Endothelial cell of umbilical vein (primary cell): ENCODE measurements at regions of chr3 and their contacts with region 1.

Region 1: GRCh38 chr3:183766745-183767606 is 58.4 kb downstream of the MAP6D1 start:
- DNase-seq: peak; percentile 74
- H3K4me3 ChIP-seq: no peak overlapping the region
- H3K27ac ChIP-seq: no peak overlapping the region
- H3K4me1 ChIP-seq: peaks cover 22% of the 10 kb centered on the region
- H3K27me3 ChIP-seq: no peaks in the 10 kb centered on the region
- CTCF ChIP-seq: peak; percentile 69 to 80
- POLR2A ChIP-seq: no peak

Region 2: DNA sequence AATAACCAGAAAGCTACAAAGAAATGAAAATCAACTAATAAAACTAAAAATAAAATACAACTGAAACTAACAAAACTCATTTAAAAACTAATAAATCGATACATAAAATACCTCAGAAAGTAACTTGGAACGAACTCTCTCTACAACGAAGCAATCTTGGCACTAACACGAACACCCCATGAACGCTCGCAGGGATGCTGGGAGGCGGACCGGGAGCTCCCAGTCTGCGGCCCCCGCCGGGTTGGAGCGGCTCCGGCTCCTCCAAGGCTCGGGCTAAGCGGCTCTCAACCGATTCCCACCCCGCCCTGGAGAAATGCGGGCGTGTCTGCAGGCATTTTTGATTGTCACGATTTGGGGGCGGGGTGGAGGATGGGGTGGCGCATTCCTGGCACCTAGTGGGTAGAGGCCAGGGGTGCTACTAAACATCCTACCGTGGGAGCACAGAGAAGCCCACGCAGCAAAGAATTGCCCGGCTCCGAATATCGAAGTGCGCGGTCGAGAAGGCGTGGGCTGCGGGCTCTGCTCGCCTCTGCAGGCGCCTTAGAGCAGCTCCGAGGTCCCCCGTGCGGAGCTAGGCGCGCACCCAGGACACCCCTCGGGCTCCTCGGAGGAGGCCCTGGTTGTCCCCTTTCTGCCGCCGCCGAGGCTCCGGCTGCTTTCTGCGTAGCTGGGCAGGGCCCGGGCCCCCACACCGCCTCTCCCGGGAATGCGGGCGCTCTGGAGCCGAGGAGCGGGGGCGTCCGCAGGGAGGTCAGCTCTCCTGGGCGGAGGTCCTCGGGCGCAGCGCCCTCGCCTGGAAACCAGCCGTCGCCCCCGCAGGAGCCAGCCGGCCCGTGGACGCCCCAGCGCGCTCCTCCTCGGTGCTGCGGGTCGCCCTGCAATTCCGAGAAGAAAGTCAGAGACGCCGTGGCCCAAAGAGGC is 588.1 kb before region 1 on chr3:
- CTCF ChIA-PET with region 1: no interaction called
- POLR2A ChIA-PET with region 1: no interaction called
- dilution Hi-C with region 1: no loop called
- intact Hi-C with region 1: loop called (anchors 5 kb)
- DNase-seq: peak; percentile 37
- H3K4me3 ChIP-seq: peak overlapping the region; percentile 38 to 78 (median 40)
- H3K27ac ChIP-seq: peak overlapping the region; percentile 7
- H3K4me1 ChIP-seq: peaks cover 5% of the 10 kb centered on the region
- H3K27me3 ChIP-seq: peaks cover 0 to 8% of the 10 kb centered on the region in 2 experiments
- CTCF ChIP-seq: peak; percentile 32 to 42
- POLR2A ChIP-seq: no peak

Region 3: GRCh38 chr3:183475016-183475763 is 291.8 kb before region 1 on chr3:
- CTCF ChIA-PET with region 1: interaction called, 84 read pairs
- POLR2A ChIA-PET with region 1: no interaction called
- dilution Hi-C with region 1: no loop called
- intact Hi-C with region 1: no loop called
- DNase-seq: peak; percentile 83
- H3K4me3 ChIP-seq: no peak overlapping the region
- H3K27ac ChIP-seq: no peak overlapping the region
- H3K4me1 ChIP-seq: peaks cover 3% of the 10 kb centered on the region
- H3K27me3 ChIP-seq: no peaks in the 10 kb centered on the region
- CTCF ChIP-seq: no peak
- POLR2A ChIP-seq: no peak

Region 4: GRCh38 chr3:183635431-183636220 is 131.3 kb before region 1 on chr3 and contains the start of gene KLHL24:
- CTCF ChIA-PET with region 1: no interaction called
- POLR2A ChIA-PET with region 1: no interaction called
- dilution Hi-C with region 1: no loop called
- intact Hi-C with region 1: loop called (anchors 2 kb)
- DNase-seq: peak; percentile 93
- H3K4me3 ChIP-seq: peak within 1 kb of the TSS; percentile 81 to 99 (median 84)
- H3K27ac ChIP-seq: peak within 1 kb of the TSS; percentile 89
- H3K4me1 ChIP-seq: peaks cover 19% of the 10 kb centered on the region
- H3K27me3 ChIP-seq: no peaks in the 10 kb centered on the region
- CTCF ChIP-seq: no peak
- POLR2A ChIP-seq: peak; percentile 41
- total RNA-seq, gene KLHL24: 45.8 and 46.2 TPM in 2 replicates

Region 5: DNA sequence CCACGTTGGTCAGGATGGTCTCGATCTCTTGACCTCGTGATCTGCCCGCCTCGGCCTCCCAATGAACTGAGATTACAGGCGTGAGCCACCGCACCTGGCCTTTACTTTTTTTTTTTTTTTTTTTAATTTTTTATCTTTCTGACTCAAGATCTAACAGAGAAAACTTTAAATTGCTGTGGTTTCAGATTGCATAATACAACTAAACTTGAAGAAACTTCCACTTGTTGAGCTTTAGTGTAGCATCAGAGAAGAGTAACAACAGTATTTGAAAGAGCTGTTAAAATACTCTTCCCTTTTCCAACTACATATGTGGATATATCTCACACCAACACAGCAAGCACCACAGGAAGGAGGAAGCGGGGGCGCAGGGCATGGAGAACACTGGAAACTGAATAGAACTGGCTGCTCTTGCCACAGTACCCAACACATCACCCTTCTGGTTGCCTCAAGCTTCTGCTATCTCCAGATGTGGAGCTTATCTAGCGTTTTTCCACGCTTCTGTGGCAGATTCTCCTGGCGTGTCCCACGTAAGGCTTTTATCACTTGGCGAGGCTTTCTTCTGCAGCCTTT is 13.0 kb after region 1 on chr3:
- CTCF ChIA-PET with region 1: interaction called, 12 read pairs
- POLR2A ChIA-PET with region 1: no interaction called
- dilution Hi-C with region 1: no loop called
- intact Hi-C with region 1: no loop called
- DNase-seq: no peak
- H3K4me3 ChIP-seq: no peak overlapping the region
- H3K27ac ChIP-seq: no peak overlapping the region
- H3K4me1 ChIP-seq: peaks cover 5% of the 10 kb centered on the region
- H3K27me3 ChIP-seq: no peaks in the 10 kb centered on the region
- CTCF ChIP-seq: no peak
- POLR2A ChIP-seq: no peak

Region 6: GRCh38 chr3:184399410-184399809 is 632.4 kb after region 1 on chr3:
- CTCF ChIA-PET with region 1: no interaction called
- POLR2A ChIA-PET with region 1: no interaction called
- dilution Hi-C with region 1: no loop called
- intact Hi-C with region 1: no loop called
- DNase-seq: no peak
- H3K4me3 ChIP-seq: no peak overlapping the region
- H3K27ac ChIP-seq: no peak overlapping the region
- H3K4me1 ChIP-seq: no peaks in the 10 kb centered on the region
- H3K27me3 ChIP-seq: peaks cover 17% of the 10 kb centered on the region in 2 experiments
- CTCF ChIP-seq: no peak
- POLR2A ChIP-seq: no peak